Gastrocnemius medialis (tissue), 4 donors: ENCODE measurements at regions of chr2 and their contacts with region 1.

Region 1: GRCh38 chr2:95345566-95346230 is 48.6 kb downstream of the KCNIP3 start:
- DNase-seq: peak; percentile 50 to 65
- ATAC-seq: peak; percentile 83 to 87
- H3K4me3 ChIP-seq: peak overlapping the region; percentile 65 to 93 (median 78)
- H3K27ac ChIP-seq: peak overlapping the region; percentile 61 to 77 (median 69)
- H3K4me1 ChIP-seq: peaks cover 3% of the 10 kb centered on the region in 2 donors
- H3K27me3 ChIP-seq: peaks cover 0 to 14% (median 7%) of the 10 kb centered on the region in 3 donors
- CTCF ChIP-seq: peak; percentile 62 to 94 (median 85)
- POLR2A ChIP-seq: no peak

Region 2: DNA sequence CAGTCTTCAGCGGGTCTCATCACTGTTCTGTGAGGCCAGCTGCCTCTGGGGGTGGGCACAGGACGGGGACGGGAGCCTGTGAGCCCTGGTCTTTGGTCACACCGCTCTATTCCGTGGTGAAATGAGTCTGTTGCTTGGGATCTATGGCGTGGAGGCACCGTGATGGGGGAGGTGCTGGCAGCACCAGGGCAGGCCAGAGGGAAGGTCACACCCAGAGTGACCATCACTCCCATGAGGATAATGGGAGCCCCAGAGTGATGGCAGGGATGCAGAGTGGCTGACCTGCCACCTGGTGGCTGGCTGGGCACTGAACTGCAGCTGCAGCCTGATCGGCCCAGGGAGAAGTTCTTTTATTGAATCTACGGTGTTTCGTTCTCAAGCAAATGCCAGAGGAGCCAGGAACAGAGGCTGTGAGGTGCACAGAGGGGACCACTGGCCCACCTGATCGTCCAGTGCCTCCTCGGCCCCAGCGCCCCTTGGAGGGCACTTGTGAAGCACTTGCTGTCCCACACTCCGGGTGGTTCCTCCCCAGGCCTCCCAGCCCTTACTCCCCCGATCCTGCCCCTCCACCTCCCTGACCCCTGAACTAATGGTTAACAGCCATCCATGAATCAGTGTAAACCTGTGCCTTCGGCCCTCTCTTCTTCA is 30.6 kb before region 1 on chr2:
- in situ Hi-C with region 1: no loop called
- intact Hi-C with region 1: no loop called
- DNase-seq: no peak
- ATAC-seq: peak in 1 of 2 donors; percentile 33
- H3K4me3 ChIP-seq: no peak overlapping the region
- H3K27ac ChIP-seq: no peak overlapping the region
- H3K4me1 ChIP-seq: no peaks in the 10 kb centered on the region
- H3K27me3 ChIP-seq: peaks cover 0 to 5% (median 0%) of the 10 kb centered on the region in 3 donors
- CTCF ChIP-seq: peak in 4 of 5 experiments; percentile 27 to 39 (median 32)
- POLR2A ChIP-seq: no peak

Region 3: GRCh38 chr2:95402370-95403203 is 56.9 kb after region 1 on chr2 and contains the start of gene FAHD2A:
- in situ Hi-C with region 1: no loop called
- intact Hi-C with region 1: loop called (anchors 2 kb)
- DNase-seq: peak; percentile 93 to 94
- ATAC-seq: peak; percentile 95 to 96
- H3K4me3 ChIP-seq: peak within 1 kb of the TSS; percentile 90 to 99 (median 96)
- H3K27ac ChIP-seq: peak within 1 kb of the TSS; percentile 85 to 96 (median 90)
- H3K4me1 ChIP-seq: peaks cover 12 to 18% of the 10 kb centered on the region in 2 donors
- H3K27me3 ChIP-seq: no peaks in the 10 kb centered on the region
- CTCF ChIP-seq: no peak
- POLR2A ChIP-seq: peak; percentile 69 to 74
- total RNA-seq, gene FAHD2A: 18.4 to 28.3 (median 27.0) TPM

Region 4: DNA sequence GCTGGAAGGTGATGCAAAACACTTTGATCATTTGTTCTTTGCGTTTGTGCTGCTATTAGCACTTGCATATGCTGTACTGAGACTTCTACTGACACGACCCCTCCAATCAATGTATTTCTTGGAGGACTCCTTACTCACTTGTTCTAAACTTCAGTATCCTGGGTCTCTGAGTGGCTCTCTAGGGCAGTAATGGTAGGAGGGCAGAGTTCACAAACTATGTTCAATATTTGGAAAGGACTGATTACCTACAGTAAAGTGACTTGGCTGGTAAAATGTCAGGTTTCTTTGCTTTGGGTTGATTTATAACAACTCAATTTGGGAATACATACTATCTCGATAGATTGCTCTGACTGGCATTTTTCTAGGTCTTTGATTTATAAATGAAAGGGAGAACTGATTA is 339.8 kb after region 1 on chr2:
- in situ Hi-C with region 1: no loop called
- intact Hi-C with region 1: loop called (anchors 10 kb)
- DNase-seq: no peak
- ATAC-seq: no peak
- H3K4me3 ChIP-seq: no peak overlapping the region
- H3K27ac ChIP-seq: no peak overlapping the region
- H3K4me1 ChIP-seq: no peaks in the 10 kb centered on the region
- H3K27me3 ChIP-seq: peaks cover 0 to 5% (median 4%) of the 10 kb centered on the region in 3 donors
- CTCF ChIP-seq: no peak
- POLR2A ChIP-seq: no peak

Region 5: DNA sequence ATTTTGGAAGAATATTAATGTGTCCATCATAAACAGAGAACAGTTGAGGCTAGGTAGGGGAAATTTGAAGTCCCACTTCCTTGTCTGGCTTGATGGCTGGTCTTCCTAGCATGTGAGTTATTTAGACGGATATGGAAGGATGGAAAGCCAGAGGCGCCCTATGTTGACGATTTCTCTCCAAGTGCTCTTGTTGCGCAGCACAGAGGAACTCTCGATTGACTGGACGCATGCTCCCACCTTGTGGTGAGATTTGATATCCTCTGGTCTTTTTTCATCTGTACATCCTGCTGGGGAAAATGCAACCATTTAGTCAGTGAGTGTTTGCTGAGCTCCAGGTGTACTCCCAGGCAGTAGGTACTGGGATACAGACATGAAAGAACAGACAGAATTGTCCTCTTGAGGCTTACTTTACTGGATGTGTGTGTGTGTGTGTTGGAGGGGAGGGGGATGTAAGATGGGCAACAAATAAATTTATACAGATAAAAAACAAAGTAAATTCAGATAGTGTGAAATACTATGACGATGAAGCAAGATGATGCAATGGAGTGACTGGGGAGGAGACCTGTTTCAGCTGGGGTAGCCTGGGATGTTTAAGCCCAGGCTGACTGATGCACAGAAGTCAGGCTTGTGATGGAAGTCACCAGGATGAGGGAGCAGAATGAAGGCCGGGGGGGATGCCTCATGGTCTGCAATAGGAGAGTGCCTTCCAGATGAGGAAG is 383.3 kb after region 1 on chr2:
- in situ Hi-C with region 1: no loop called
- intact Hi-C with region 1: loop called (anchors 10 kb)
- DNase-seq: peak; percentile 18 to 51
- ATAC-seq: peak; percentile 65 to 72
- H3K4me3 ChIP-seq: no peak overlapping the region
- H3K27ac ChIP-seq: no peak overlapping the region
- H3K4me1 ChIP-seq: no peaks in the 10 kb centered on the region
- H3K27me3 ChIP-seq: no peaks in the 10 kb centered on the region
- CTCF ChIP-seq: peak in 4 of 5 experiments; percentile 28 to 57 (median 52)
- POLR2A ChIP-seq: no peak